HepG2 (cell line): ENCODE measurements at regions of chr17 and their contacts with region 1.

Region 1: DNA sequence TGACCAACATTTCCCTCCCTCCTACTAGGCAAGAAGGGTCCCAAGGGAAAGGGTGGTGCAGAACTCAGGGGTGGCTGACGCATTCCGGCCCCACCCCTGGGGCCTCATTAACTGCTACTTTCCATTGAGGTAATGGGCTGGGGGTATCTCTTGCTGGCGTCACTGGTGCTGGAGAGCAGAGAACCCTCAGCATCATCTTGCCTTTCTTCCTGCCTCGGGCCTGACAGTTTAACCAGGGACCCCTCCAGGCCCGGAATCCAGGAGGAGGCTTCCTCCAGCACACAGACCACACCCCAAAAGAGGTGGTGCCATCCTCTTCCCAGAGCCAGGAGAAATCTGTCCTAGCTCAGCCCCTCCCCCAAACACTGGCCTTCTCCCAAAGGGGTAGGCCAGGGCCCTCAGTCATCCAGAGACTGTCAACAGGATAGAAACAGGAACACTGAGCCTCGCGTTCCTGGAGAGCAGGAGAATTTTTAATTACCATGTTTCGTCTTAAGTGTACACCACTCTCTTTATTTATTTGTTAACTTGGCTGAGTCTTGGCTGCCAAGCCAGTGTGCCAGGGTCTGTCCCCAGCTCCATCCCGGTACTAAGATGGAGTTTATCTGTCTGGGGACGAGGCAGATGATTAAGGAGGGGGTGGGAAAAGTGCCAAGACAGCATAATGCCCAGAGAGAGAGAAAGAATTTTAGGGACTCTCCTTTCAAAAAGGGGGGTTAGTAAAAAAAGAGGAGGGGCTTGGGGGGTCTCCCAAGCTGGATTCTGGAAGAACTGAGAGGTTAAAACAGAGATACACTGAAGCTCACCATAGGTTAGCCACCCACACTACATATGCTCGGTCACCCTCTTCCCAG is 5.1 kb downstream of the ETV4 start:
- DNase-seq: no peak
- ATAC-seq: no peak
- H3K4me3 ChIP-seq: peak overlapping the region in 2 of 3 experiments; percentile 31 to 84; a peak in 4 of 6 replicates
- H3K27ac ChIP-seq: peak overlapping the region; percentile 100
- H3K4me1 ChIP-seq: peaks cover 72% of the 10 kb centered on the region
- H3K27me3 ChIP-seq: peaks cover 0 to 7% of the 10 kb centered on the region in 2 experiments; a peak in 1 of 5 replicates
- CTCF ChIP-seq: no peak
- EP300 ChIP-seq: no peak
- POLR2A ChIP-seq: peak in 1 of 2 experiments; percentile 34; a peak in 2 of 4 replicates
- RAD21 ChIP-seq: no peak

Region 2: DNA sequence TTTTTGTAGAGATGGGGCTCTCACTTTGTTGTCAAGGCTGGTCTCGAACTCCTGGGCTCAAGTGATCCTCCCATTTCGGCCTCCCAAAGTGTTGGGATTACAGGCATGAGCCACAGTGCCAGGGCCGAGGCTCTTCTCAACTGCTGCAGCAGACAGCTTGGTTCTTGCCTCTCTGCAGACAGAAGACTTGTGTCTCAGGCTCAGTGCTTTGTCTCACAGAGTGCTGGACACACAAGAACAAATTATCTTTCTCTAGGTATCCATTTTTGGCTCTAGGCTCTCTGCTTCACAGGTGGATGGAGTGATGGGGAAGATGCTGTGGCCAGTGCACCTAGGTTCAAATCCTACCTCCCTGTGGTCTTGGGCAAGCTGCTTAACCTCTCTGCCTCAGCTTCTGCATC is 226.4 kb before region 1 on chr17:
- CTCF ChIA-PET with region 1: no interaction called
- POLR2A ChIA-PET with region 1: no interaction called
- in situ Hi-C with region 1: no loop called
- intact Hi-C with region 1: no loop called
- DNase-seq: no peak
- ATAC-seq: no peak
- H3K4me3 ChIP-seq: no peak overlapping the region
- H3K27ac ChIP-seq: no peak overlapping the region
- H3K4me1 ChIP-seq: peaks cover 20% of the 10 kb centered on the region
- H3K27me3 ChIP-seq: 0 out of 5 replicates have a peak, but pooled peaks cover 0 to 2% of the 10 kb centered on the region in 2 experiments
- CTCF ChIP-seq: no peak
- EP300 ChIP-seq: no peak
- POLR2A ChIP-seq: no peak
- RAD21 ChIP-seq: no peak

Region 3: DNA sequence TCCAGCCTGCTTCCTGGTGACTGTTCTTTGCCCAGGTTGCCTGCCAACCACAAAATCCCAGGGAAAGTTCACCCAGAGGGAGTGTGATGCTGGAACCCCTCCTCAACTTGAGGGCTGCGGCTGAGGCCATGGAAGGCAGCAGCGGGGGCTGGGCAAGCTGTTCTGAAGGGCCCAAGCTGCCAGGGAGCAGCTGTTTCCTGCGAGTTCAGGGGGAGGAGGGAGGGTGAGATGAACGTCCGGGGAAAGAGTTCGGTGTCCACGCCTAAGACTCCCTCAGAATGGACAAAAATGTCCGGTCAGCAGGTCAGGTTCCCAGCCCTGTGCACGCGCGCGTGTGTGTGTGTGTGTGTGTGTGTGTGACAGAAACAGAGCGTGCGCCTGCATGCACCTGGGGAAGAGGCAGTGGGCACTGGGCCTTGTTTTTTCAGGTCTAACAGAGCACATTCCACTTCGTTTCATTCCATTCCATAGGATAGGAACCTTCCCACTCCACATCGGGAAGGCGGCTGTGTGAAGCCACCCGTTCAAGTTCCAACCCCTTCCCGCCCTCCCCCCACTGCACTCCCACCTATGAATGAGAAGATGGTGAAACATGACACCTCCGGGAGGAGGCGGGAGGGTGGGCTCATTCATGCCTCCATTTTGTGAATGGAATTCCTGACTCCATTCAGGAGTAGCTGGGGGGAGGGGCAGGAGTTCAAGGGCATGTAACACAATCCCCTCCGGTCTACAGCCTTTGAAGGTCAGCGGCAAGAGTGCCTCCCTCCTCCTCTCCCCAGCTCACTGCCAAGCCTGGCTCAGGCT is 10.6 kb before region 1 on chr17:
- CTCF ChIA-PET with region 1: no interaction called
- POLR2A ChIA-PET with region 1: interaction called, 1,546 read pairs
- in situ Hi-C with region 1: no loop called
- intact Hi-C with region 1: loop called (anchors 1 kb)
- DNase-seq: peak; percentile 100
- ATAC-seq: peak; percentile 74
- H3K4me3 ChIP-seq: peak overlapping the region in 2 of 3 experiments; percentile 26 to 58; a peak in 4 of 6 replicates
- H3K27ac ChIP-seq: peak overlapping the region; percentile 96
- H3K4me1 ChIP-seq: peaks cover 97% of the 10 kb centered on the region
- H3K27me3 ChIP-seq: no peaks in the 10 kb centered on the region
- CTCF ChIP-seq: peak; percentile 31; the same call in 1 of the 2 replicates
- EP300 ChIP-seq: peak; percentile 97 to 98
- POLR2A ChIP-seq: peak; percentile 82 to 93
- RAD21 ChIP-seq: peak; percentile 45

Region 4: GRCh38 chr17:43658900-43659299 is 117.9 kb after region 1 on chr17:
- CTCF ChIA-PET with region 1: no interaction called
- POLR2A ChIA-PET with region 1: no interaction called
- in situ Hi-C with region 1: no loop called
- intact Hi-C with region 1: no loop called
- DNase-seq: no peak
- ATAC-seq: peak; percentile 20; the same call in 1 of the 3 replicates
- H3K4me3 ChIP-seq: no peak overlapping the region; a peak in 1 of 6 replicates
- H3K27ac ChIP-seq: no peak overlapping the region
- H3K4me1 ChIP-seq: peaks cover 16% of the 10 kb centered on the region
- H3K27me3 ChIP-seq: peaks cover 13 to 43% of the 10 kb centered on the region in 2 experiments; a peak in 4 of 5 replicates
- CTCF ChIP-seq: no peak
- EP300 ChIP-seq: no peak
- POLR2A ChIP-seq: no peak
- RAD21 ChIP-seq: no peak